Heart right ventricle (tissue), 16 donors: ENCODE measurements at regions of chr2 and their contacts with region 1.

Region 1: DNA sequence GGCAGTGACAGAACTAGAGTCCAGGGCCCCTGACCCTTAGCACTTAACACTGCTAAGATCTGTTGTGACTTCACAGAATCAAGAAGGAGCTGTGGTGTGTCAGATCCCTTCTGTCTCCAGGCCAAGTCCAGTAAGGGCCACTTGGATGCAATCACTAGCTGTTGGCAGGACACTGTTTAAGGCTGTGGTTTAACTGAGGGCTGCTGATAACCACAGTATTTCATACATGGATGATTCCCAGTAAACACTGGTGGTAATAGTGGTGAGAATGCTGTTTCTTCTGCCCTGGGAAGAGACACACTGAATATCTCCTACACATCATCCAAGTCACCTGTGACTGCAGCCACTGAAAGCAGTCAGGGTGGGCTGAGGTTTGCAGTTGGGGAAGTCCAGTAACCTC is 77.7 kb upstream of the FBXO11 start:
- DNase-seq: no peak
- ATAC-seq: peak in 1 of 8 donors; percentile 82
- H3K4me3 ChIP-seq: no peak overlapping the region
- H3K27ac ChIP-seq: no peak overlapping the region
- H3K4me1 ChIP-seq: no peaks in the 10 kb centered on the region
- H3K27me3 ChIP-seq: peaks cover 0 to 14% (median 0%) of the 10 kb centered on the region in 7 donors
- CTCF ChIP-seq: no peak

Region 2: DNA sequence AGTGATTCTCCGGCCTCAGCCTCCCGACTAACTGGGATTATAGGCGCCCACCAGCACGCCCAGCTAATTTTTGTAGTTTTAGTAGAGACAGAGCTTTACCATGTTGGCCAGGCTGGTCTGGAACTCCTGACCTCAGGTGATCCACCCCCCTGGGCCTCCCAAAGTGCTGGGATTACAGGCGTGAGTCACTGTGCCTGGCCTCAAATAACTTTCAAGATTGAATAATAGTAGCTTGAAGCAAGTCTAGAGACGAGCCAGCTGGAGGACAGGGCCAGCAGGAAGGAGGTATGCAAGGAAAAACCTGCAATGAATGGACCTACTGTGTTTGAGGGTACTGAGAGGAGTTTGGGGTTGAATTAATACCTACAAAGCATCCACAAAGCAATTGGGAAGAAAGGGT is 493.6 kb before region 1 on chr2:
- intact Hi-C with region 1: loop called in 1 of 10 experiments (anchors 10 kb)
- DNase-seq: no peak
- ATAC-seq: no peak
- H3K4me3 ChIP-seq: no peak overlapping the region
- H3K27ac ChIP-seq: no peak overlapping the region
- H3K4me1 ChIP-seq: peaks cover 0 to 7% (median 0%) of the 10 kb centered on the region in 9 donors
- H3K27me3 ChIP-seq: no peaks in the 10 kb centered on the region
- CTCF ChIP-seq: no peak

Region 3: DNA sequence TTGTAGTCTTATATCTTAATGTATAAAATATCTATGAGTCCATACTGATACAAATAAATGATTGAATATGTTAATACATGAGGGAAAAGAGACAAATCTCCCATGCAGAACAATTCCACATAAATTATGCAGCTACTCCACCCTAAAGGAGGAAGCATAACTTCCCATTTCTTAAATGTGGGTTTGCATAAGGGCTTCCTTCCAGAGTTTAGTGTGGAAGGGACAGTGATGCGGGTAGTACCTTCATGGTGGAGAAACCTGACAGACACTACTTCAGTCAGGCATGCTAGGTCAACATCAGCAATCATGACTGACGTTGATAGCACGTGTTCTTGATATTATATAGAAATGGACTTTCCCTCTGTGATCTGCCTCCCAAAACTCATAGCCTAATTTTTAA is 399.0 kb after region 1 on chr2:
- intact Hi-C with region 1: no loop called
- DNase-seq: no peak
- ATAC-seq: no peak
- H3K4me3 ChIP-seq: no peak overlapping the region
- H3K27ac ChIP-seq: no peak overlapping the region
- H3K4me1 ChIP-seq: peaks cover 0 to 14% (median 7%) of the 10 kb centered on the region in 9 donors
- H3K27me3 ChIP-seq: no peaks in the 10 kb centered on the region
- CTCF ChIP-seq: no peak